ENCODE measurements at regions of chr3 and their contacts with region 1.

Region 1: GRCh38 chr3:153621953-153622352 is 459.9 kb downstream of the RAP2B start:
- DNase-seq: peak; percentile 24
- H3K4me3 Mint-ChIP-seq: no peak overlapping the region
- H3K27ac Mint-ChIP-seq: peak overlapping the region; percentile 72
- H3K4me1 Mint-ChIP-seq: peaks cover 62% of the 10 kb centered on the region
- H3K27me3 Mint-ChIP-seq: no peaks in the 10 kb centered on the region

Region 2: GRCh38 chr3:153138276-153139210 is 483.4 kb before region 1 on chr3:
- CTCF ChIA-PET with region 1: no interaction called
- POLR2A ChIA-PET with region 1: no interaction called
- intact Hi-C with region 1: loop called (anchors 1 kb)
- DNase-seq: peak; percentile 91
- H3K4me3 Mint-ChIP-seq: no peak overlapping the region
- H3K27ac Mint-ChIP-seq: peak overlapping the region; percentile 73
- H3K4me1 Mint-ChIP-seq: peaks cover 35% of the 10 kb centered on the region
- H3K27me3 Mint-ChIP-seq: peaks cover 5% of the 10 kb centered on the region

Region 3: GRCh38 chr3:153285194-153285641 is 336.7 kb before region 1 on chr3:
- CTCF ChIA-PET with region 1: no interaction called
- POLR2A ChIA-PET with region 1: no interaction called
- intact Hi-C with region 1: loop called (anchors 1 kb)
- DNase-seq: no peak
- H3K4me3 Mint-ChIP-seq: no peak overlapping the region
- H3K27ac Mint-ChIP-seq: peak overlapping the region; percentile 60
- H3K4me1 Mint-ChIP-seq: peaks cover 48% of the 10 kb centered on the region
- H3K27me3 Mint-ChIP-seq: no peaks in the 10 kb centered on the region

Region 4: DNA sequence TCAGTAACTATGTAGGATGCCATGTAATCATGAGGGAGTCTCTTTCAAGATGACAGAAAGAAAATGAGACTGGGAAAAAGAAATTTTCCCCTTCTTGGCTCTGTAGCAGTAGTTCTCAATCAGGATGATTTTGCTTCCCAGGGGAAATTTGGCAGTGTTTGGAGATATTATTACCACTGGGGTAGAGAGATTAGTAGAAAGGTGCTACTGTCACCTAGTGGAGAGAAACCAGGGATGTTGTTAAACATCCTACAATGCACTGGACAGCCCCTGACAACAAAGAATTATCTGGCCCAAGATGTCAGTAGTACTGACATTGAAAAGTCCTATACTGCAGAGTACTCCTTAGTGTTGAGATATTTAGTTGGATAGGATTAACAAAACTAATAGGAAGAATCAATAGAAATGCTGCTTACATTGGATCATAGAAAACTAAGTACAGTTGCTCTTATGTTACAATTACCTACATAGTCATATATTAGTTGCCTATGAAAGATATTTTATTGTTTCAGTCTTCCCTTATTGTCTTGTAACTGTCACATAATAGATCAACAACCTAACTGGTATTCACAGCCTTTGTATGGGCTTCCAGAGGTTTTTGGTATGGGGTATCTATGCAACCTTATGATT is 26.7 kb before region 1 on chr3:
- CTCF ChIA-PET with region 1: interaction called, 4 read pairs
- POLR2A ChIA-PET with region 1: no interaction called
- intact Hi-C with region 1: loop called (anchors 2 kb)
- DNase-seq: no peak
- H3K4me3 Mint-ChIP-seq: no peak overlapping the region
- H3K27ac Mint-ChIP-seq: no peak overlapping the region
- H3K4me1 Mint-ChIP-seq: peaks cover 13% of the 10 kb centered on the region
- H3K27me3 Mint-ChIP-seq: no peaks in the 10 kb centered on the region

Region 5: DNA sequence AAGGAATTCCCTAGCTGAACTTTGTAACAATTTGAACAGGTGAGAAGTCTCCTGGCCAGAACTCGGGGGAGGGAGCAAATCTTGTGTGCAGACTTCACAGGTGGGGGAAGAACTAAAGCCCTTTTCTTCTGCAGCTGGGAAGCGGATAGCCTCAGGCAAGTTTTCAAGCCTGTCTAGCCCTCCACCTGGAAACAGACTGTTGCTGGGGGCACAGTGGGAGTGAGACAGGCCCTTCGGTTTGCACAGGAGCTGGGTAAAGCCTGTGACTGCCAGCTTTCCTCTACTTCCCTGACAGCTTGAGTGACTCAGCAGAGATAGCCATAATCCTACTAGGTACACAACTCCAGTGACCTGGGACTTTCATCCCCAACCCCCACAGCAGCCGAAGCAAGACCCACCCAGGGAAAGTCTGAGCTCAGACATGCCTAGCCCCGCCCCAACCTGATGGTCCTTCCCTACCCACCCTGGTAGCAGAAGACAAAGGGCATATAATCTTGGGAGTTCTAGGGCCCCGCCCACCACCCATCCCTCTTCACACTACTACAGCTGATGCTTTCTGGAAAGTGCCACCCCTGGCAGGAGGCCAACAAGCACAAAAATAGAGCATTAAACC is 18.8 kb after region 1 on chr3:
- CTCF ChIA-PET with region 1: no interaction called
- POLR2A ChIA-PET with region 1: interaction called, 4 read pairs
- intact Hi-C with region 1: loop called (anchors 2 kb)
- DNase-seq: no peak
- H3K4me3 Mint-ChIP-seq: no peak overlapping the region
- H3K27ac Mint-ChIP-seq: no peak overlapping the region
- H3K4me1 Mint-ChIP-seq: peaks cover 43% of the 10 kb centered on the region
- H3K27me3 Mint-ChIP-seq: no peaks in the 10 kb centered on the region

Region 6: GRCh38 chr3:153768561-153769469 is 146.9 kb after region 1 on chr3:
- CTCF ChIA-PET with region 1: interaction called, 4 read pairs
- POLR2A ChIA-PET with region 1: no interaction called
- intact Hi-C with region 1: loop called (anchors 10 kb)
- DNase-seq: peak; percentile 57
- H3K4me3 Mint-ChIP-seq: no peak overlapping the region
- H3K27ac Mint-ChIP-seq: no peak overlapping the region
- H3K4me1 Mint-ChIP-seq: peaks cover 2% of the 10 kb centered on the region
- H3K27me3 Mint-ChIP-seq: peaks cover 2% of the 10 kb centered on the region

Region 7: GRCh38 chr3:153829606-153830170 is 207.7 kb after region 1 on chr3:
- CTCF ChIA-PET with region 1: no interaction called
- POLR2A ChIA-PET with region 1: no interaction called
- intact Hi-C with region 1: no loop called
- DNase-seq: no peak
- H3K4me3 Mint-ChIP-seq: no peak overlapping the region
- H3K27ac Mint-ChIP-seq: peak overlapping the region; percentile 36
- H3K4me1 Mint-ChIP-seq: peaks cover 6% of the 10 kb centered on the region
- H3K27me3 Mint-ChIP-seq: peaks cover 2% of the 10 kb centered on the region

Region 8: GRCh38 chr3:154323891-154324738 is 702.2 kb after region 1 on chr3 and contains the start of gene DHX36:
- CTCF ChIA-PET with region 1: no interaction called
- POLR2A ChIA-PET with region 1: no interaction called
- intact Hi-C with region 1: loop called (anchors 5 kb)
- DNase-seq: peak; percentile 93
- H3K4me3 Mint-ChIP-seq: peak within 1 kb of the TSS; percentile 85
- H3K27ac Mint-ChIP-seq: peak within 1 kb of the TSS; percentile 96
- H3K4me1 Mint-ChIP-seq: peaks cover 29% of the 10 kb centered on the region
- H3K27me3 Mint-ChIP-seq: no peaks in the 10 kb centered on the region
- total RNA-seq, gene DHX36: 65.5 to 71.1 TPM